Activated B cell treated with CpG ODN at 0.5 μM for 24 hours (primary cell): ENCODE measurements at regions of chr2 and their contacts with region 1.

Region 1: DNA sequence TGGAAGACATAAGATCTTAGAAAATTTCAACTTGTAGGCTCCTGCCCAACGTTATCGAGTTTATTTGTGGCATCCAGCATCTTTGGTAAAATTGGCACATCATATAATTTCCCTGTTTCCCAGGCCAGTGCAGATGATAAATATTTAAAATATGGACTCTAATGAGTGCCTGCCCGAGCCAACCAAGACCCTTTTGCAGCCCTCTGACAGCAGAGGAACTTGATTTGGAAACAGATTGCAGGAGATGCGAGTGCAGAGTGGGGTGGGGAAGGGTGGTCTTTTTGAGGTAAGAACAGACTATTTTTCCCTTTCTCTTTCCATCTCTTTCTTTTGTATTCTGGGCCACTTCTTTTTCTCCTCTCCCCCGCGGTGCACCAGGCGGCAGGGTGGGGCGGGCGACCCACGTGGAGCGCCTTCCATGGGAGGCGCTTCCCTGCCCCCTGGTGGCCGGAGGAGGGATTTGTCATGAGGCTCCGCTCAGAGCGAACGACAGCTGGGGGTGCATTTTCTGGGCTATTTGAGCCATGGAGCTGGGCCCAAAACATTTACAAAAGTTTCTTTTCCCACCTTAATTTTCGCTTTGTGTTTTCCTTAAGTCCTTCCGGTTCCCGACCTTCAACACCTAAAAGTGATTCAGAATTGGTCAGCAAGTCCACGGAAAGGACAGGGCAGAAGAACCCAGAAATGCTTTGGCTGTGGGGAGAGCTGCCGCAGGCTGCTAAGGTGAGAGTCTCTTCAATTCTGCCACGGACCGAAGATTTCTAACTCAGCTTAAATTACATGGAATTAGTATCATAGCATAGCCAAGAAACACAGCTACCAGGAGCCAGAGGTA is 32.7 kb downstream of the LPIN1 start:
- DNase-seq: peak; percentile 79
- ATAC-seq: peak; percentile 94
- H3K4me3 Mint-ChIP-seq: peak overlapping the region; percentile 52
- H3K27ac Mint-ChIP-seq: no peak overlapping the region
- H3K4me1 Mint-ChIP-seq: peaks cover 32% of the 10 kb centered on the region
- H3K27me3 Mint-ChIP-seq: no peaks in the 10 kb centered on the region
- CTCF ChIP-seq: peak; percentile 1

Region 2: DNA sequence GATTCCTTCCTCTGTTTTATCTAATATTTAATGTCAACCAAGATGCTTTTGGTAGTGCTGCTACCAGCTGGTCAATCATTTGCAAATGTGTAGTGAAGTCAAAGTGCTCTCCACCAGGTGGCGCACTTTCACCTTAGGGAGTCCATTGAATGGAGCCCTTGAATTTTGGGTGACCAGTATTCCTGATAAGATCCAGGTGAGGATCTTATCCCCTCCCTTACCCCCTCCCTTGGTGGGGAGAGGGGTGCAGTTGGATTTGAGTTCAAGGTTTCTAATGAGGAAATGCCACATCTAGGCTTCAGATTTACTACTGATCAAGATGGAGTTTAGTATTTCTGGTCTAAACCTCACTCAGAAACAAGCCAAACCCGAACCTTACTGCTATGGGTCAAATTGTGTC is 301.1 kb before region 1 on chr2:
- CTCF ChIA-PET with region 1: interaction called, 18 read pairs
- POLR2A ChIA-PET with region 1: no interaction called
- intact Hi-C with region 1: loop called (anchors 1 kb)
- DNase-seq: peak; percentile 59
- ATAC-seq: peak; percentile 71
- H3K4me3 Mint-ChIP-seq: no peak overlapping the region
- H3K27ac Mint-ChIP-seq: no peak overlapping the region
- H3K4me1 Mint-ChIP-seq: peaks cover under 1% of the 10 kb centered on the region
- H3K27me3 Mint-ChIP-seq: peaks cover 17% of the 10 kb centered on the region
- CTCF ChIP-seq: peak; percentile 75

Region 3: DNA sequence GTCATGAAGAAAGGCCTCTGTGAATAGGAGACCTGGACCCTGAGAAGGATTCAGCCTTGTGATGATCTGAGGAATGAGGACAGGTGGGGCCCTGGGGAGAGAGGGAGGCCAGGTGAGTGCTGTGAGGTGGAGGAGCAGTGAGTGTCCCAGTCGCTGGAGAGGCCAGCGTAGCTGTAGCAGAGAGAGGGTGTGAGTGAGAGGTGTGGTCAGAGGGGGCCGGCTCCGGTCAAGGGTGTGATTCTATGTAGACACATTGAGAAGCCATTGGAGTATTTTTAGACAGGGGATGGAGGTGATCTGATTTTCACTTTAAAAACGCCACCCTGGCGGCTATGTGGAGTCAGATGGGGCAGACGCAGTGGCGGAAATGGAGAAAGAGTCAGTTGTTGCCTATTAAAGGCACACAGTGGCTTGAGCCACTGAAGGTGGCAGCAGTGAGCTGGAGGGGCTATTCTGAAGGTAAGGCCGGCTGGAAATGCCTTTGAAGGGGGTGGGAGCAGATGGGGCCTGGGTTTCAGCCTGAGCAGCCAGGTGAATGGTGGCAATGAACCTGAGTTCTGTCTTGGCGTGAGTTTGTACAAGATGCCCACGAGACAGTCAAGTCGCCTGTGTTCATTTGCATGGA is 189.7 kb before region 1 on chr2:
- CTCF ChIA-PET with region 1: interaction called, 8 read pairs
- POLR2A ChIA-PET with region 1: no interaction called
- intact Hi-C with region 1: loop called (anchors 1 kb)
- DNase-seq: no peak
- ATAC-seq: no peak
- H3K4me3 Mint-ChIP-seq: no peak overlapping the region
- H3K27ac Mint-ChIP-seq: no peak overlapping the region
- H3K4me1 Mint-ChIP-seq: no peaks in the 10 kb centered on the region
- H3K27me3 Mint-ChIP-seq: peaks cover 5% of the 10 kb centered on the region
- CTCF ChIP-seq: no peak

Region 4: GRCh38 chr2:11688222-11689069 is 90.7 kb before region 1 on chr2:
- CTCF ChIA-PET with region 1: interaction called, 173 read pairs
- POLR2A ChIA-PET with region 1: no interaction called
- intact Hi-C with region 1: loop called (anchors 1 kb)
- DNase-seq: peak; percentile 68
- ATAC-seq: peak; percentile 87
- H3K4me3 Mint-ChIP-seq: peak overlapping the region; percentile 39
- H3K27ac Mint-ChIP-seq: no peak overlapping the region
- H3K4me1 Mint-ChIP-seq: peaks cover 9% of the 10 kb centered on the region
- H3K27me3 Mint-ChIP-seq: peaks cover 8% of the 10 kb centered on the region
- CTCF ChIP-seq: no peak

Region 5: GRCh38 chr2:11738589-11739436 is 40.3 kb before region 1 on chr2:
- CTCF ChIA-PET with region 1: interaction called, 54 read pairs
- POLR2A ChIA-PET with region 1: interaction called, 6 read pairs
- intact Hi-C with region 1: loop called (anchors 1 kb)
- DNase-seq: no peak
- ATAC-seq: peak; percentile 75
- H3K4me3 Mint-ChIP-seq: no peak overlapping the region
- H3K27ac Mint-ChIP-seq: no peak overlapping the region
- H3K4me1 Mint-ChIP-seq: peaks cover 8% of the 10 kb centered on the region
- H3K27me3 Mint-ChIP-seq: peaks cover 8% of the 10 kb centered on the region
- CTCF ChIP-seq: no peak

Region 6: DNA sequence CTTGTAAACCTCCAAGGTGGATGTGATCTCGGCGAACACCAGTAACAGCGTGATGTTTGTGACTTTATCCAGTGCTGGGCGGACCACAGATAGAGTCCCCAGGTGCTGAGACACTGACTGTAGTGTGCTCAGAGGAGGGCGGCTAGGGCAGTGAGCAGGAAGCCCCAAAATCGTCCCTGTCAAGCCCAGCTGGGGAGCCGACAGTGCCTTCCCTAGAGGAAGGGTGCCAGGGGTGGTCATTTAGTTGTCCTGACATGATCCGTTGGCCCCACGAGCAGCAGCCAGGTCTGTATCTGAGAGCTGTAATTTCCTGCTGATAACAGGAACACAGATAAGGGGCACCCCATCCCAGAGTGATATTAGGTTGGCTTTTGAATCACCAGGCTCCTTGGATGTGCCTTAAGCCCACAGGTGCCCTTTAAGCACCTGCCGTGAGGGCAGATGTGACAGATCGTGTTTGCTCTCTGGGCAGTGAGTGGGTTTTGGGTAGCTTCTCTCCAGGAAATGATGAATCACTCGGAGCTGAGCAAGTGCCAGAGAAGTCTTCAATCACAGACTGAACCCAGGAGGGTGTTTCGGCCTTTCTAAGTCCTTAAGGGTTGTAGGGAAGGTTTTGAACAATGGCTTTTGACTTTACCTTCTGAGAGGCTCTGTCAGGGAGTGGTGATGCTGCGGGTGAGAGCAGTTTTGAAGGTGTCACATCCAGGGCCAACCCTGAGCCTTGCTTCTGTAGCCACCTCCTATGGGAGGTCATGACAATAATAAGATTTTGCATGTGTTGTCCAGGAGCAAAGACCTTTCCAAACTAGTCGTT is 25.0 kb before region 1 on chr2:
- CTCF ChIA-PET with region 1: interaction called, 18 read pairs
- POLR2A ChIA-PET with region 1: interaction called, 16 read pairs
- intact Hi-C with region 1: loop called (anchors 1 kb)
- DNase-seq: peak; percentile 43
- ATAC-seq: peak; percentile 54
- H3K4me3 Mint-ChIP-seq: peak overlapping the region; percentile 82
- H3K27ac Mint-ChIP-seq: peak overlapping the region; percentile 96
- H3K4me1 Mint-ChIP-seq: peaks cover 90% of the 10 kb centered on the region
- H3K27me3 Mint-ChIP-seq: no peaks in the 10 kb centered on the region
- CTCF ChIP-seq: no peak